ENCODE measurements at regions of chr15 and their contacts with region 1.

Region 1: GRCh38 chr15:33700695-33701304 is 267.5 kb upstream of the CHRM5 start:
- DNase-seq: peak; percentile 87
- H3K4me3 Mint-ChIP-seq: no peak overlapping the region
- H3K27ac Mint-ChIP-seq: no peak overlapping the region
- H3K4me1 Mint-ChIP-seq: no peaks in the 10 kb centered on the region
- H3K27me3 Mint-ChIP-seq: peaks cover 2% of the 10 kb centered on the region

Region 2: GRCh38 chr15:33234014-33234461 is 466.8 kb before region 1 on chr15:
- intact Hi-C with region 1: loop called (anchors 10 kb)
- DNase-seq: no peak
- H3K4me3 Mint-ChIP-seq: no peak overlapping the region
- H3K27ac Mint-ChIP-seq: no peak overlapping the region
- H3K4me1 Mint-ChIP-seq: no peaks in the 10 kb centered on the region
- H3K27me3 Mint-ChIP-seq: peaks cover 12% of the 10 kb centered on the region

Region 3: DNA sequence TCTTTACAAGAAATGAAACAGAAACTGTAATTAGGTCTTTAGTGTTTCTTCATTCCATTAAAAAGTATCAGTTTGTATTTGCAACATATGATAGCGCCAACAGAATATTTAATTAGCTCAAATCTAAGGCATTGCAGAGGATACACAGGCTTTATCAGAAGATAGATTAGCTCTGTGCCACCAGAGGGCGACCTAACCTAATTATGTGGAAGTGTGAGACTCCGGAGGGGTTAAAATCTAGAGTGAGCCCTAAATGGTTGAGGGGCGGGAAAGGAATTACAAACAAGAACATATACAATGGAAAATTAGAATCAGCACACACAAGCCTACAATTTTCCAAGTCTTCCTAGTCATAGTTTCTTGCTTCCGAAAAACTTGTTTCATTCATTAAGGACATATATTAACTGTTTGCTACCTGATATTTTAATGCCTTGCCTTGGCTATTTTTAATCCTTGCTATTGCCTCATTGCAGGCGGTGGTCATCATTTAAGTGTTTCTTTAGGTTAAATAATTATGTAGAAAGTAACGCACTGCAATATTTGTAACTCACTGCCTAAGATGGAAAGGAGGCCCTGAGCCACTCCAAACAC is 408.0 kb before region 1 on chr15:
- intact Hi-C with region 1: loop called (anchors 2 kb)
- DNase-seq: peak; percentile 79
- H3K4me3 Mint-ChIP-seq: no peak overlapping the region
- H3K27ac Mint-ChIP-seq: no peak overlapping the region
- H3K4me1 Mint-ChIP-seq: no peaks in the 10 kb centered on the region
- H3K27me3 Mint-ChIP-seq: peaks cover 2% of the 10 kb centered on the region

Region 4: GRCh38 chr15:33722005-33722672 is 21.3 kb after region 1 on chr15:
- intact Hi-C with region 1: no loop called
- DNase-seq: no peak
- H3K4me3 Mint-ChIP-seq: no peak overlapping the region
- H3K27ac Mint-ChIP-seq: no peak overlapping the region
- H3K4me1 Mint-ChIP-seq: no peaks in the 10 kb centered on the region
- H3K27me3 Mint-ChIP-seq: peaks cover 2% of the 10 kb centered on the region